MCF 10A (cell line): ENCODE measurements at regions of chr15 and their contacts with region 1.

Region 1: GRCh38 chr15:99712415-99712814 is 20.8 kb downstream of the LYSMD4 start:
- DNase-seq: no peak
- H3K4me3 Mint-ChIP-seq: no peak overlapping the region
- H3K27ac Mint-ChIP-seq: no peak overlapping the region
- H3K4me1 Mint-ChIP-seq: peaks cover 21% of the 10 kb centered on the region
- H3K27me3 Mint-ChIP-seq: no peaks in the 10 kb centered on the region
- CTCF ChIP-seq: no peak

Region 2: DNA sequence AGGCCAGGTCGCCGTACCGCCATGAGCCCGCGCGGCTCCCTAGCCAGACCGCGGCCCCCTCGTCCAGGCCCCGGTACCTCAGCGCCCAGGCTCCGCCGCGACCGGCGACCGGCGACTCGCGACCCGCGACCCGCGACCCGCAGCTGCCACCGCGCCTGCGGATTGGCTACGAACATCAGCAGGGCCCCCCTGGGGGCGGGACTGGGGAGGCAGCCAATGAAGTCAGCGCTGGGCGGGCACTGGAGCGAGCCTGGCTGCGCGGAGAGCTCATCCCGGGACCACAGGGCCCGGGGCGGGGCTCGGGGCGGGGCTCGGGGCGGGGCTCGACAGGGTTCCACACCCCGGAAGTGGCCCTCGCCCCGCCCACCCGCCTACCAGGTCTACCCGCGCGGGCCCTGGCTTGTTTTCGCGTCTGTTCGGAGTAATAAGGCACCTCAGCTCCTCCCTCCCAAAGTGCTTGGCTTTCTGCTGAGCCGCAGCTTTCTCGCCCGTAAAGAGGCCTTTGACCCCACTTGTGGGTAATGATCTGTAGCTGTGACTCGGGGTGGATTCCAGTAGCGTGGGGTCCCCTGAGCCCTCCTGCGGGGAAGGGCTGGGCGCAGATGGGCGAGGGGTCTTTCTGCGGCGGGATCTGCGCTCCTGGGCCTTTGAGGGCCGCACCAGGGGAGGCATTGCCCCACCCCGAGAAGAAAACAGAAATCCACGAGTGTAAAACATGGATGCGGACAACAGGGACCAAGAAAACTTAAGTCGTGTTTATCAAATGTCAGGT is 21.0 kb after region 1 on chr15 and contains the start of gene LYSMD4:
- CTCF ChIA-PET with region 1: interaction called, 7 read pairs
- POLR2A ChIA-PET with region 1: interaction called, 53 read pairs
- intact Hi-C with region 1: loop called (anchors 1 kb)
- DNase-seq: peak; percentile 95
- H3K4me3 Mint-ChIP-seq: peak within 1 kb of the TSS; percentile 77
- H3K27ac Mint-ChIP-seq: peak within 1 kb of the TSS; percentile 94
- H3K4me1 Mint-ChIP-seq: peaks cover 14% of the 10 kb centered on the region
- H3K27me3 Mint-ChIP-seq: no peaks in the 10 kb centered on the region
- CTCF ChIP-seq: no peak
- total RNA-seq, gene LYSMD4: 5.7 and 9.0 TPM in 2 replicates

Region 3: GRCh38 chr15:99911816-99912215 is 199.4 kb after region 1 on chr15:
- CTCF ChIA-PET with region 1: no interaction called
- POLR2A ChIA-PET with region 1: no interaction called
- intact Hi-C with region 1: no loop called
- DNase-seq: peak; percentile 5
- H3K4me3 Mint-ChIP-seq: no peak overlapping the region
- H3K27ac Mint-ChIP-seq: no peak overlapping the region
- H3K4me1 Mint-ChIP-seq: peaks cover 5% of the 10 kb centered on the region
- H3K27me3 Mint-ChIP-seq: peaks cover under 1% of the 10 kb centered on the region
- CTCF ChIP-seq: no peak